GM12878 (cell line): ENCODE measurements at regions of chr1 and their contacts with region 1.

Region 1: DNA sequence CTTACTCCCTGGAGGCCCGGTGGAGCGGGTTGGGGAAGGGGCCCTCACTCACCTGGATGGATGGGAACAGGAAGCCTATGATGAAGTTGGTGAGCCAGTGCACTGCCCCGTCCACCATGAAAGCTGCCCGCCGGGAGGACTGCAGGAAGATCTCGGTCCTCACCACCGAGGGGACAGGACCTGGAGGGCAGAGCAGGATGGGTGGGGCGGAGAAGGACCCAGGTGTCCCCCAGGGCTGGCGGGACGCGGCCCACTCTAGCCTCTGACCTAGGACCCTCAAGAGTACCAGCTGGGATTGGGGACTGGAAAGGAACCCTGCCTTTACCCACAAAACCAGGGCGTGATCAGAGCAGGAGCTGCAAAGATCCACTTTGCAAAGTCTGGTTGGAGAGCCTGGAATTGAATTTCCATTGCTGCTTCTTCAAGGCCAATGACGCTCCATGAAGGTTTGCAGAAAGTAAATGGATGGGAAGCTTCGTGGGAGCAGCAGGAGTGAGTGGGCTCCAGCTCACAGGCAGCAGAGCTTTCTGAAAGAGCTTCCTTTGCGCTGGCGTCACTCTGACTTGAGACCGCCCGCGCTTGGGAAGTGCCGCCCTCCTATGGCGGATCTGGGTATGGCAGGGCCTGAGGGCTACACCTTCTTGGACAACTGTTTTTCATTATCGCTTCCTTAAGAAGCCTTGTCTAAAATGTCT is 21.4 kb downstream of the SLC2A7 start:
- DNase-seq: no peak
- ATAC-seq: peak; percentile 73
- H3K4me3 ChIP-seq: no peak overlapping the region
- H3K27ac ChIP-seq: no peak overlapping the region
- H3K4me1 ChIP-seq: peaks cover 22% of the 10 kb centered on the region
- H3K27me3 ChIP-seq: no peaks in the 10 kb centered on the region
- CTCF ChIP-seq: peak; percentile 89 to 97 (median 97)
- EP300 ChIP-seq: no peak
- POLR2A ChIP-seq: no peak
- RAD21 ChIP-seq: peak; percentile 82

Region 2: GRCh38 chr1:8358904-8359603 is 645.8 kb before region 1 on chr1:
- CTCF ChIA-PET with region 1: no interaction called
- POLR2A ChIA-PET with region 1: no interaction called
- RAD21 ChIA-PET with region 1: no interaction called
- SMC1A ChIA-PET with region 1: no interaction called
- in situ Hi-C with region 1: no loop called
- intact Hi-C with region 1: no loop called
- DNase-seq: no peak
- ATAC-seq: no peak
- H3K4me3 ChIP-seq: no peak overlapping the region
- H3K27ac ChIP-seq: no peak overlapping the region
- H3K4me1 ChIP-seq: no peaks in the 10 kb centered on the region
- H3K27me3 ChIP-seq: no peaks in the 10 kb centered on the region
- CTCF ChIP-seq: no peak
- EP300 ChIP-seq: no peak
- POLR2A ChIP-seq: 0 out of 2 replicates have a peak, but pooled peaks have one; percentile 3
- RAD21 ChIP-seq: no peak

Region 3: DNA sequence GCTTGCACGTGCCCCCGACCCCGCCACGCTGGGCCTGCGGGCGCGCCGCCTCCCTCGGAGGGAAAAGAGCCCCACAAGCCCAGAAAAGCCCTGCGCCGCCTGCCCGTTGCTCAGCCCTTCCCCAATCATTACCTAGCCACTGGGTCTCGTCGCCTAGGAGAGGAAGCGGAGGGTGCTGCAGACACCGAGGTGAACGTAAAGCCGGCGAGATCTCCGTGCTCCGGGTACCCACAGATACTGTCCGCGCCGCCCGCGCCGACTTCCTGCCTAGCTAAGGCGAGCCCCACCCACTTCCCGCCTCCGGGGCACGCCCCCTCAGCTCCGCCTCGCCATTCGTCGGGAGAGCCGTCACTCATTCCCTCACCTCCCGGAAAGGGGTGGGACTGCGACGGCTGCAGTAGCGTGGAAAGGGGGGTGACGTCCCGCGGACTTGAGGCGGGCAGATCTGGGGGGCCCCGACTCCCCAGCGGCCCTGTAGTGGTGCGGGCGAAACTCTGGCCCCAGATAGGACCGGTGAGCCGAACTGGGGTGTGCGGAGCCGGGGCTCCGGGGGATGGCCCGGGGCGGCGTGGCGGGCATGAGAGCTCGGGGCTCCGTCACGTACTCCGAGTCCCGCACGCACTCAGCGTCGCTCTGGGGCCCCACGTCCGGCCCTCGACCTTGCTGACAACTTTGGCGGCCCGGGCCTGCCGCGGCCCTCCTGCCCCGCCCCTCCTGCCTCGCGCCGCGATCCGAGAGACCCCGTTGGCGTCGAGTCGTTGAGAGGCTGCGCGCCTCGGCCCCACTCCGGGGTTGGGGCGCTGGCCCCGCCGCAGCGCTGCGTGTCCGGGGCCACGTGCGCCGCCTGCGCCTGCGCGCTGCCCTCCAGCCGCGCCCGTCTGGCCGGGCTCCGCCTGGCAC is 126.1 kb before region 1 on chr1 and contains the start of gene ENO1:
- CTCF ChIA-PET with region 1: interaction called, 10 read pairs
- POLR2A ChIA-PET with region 1: no interaction called
- RAD21 ChIA-PET with region 1: interaction called, 3 read pairs
- SMC1A ChIA-PET with region 1: no interaction called
- in situ Hi-C with region 1: no loop called
- intact Hi-C with region 1: no loop called
- DNase-seq: peak; percentile 98
- ATAC-seq: peak; percentile 80
- H3K4me3 ChIP-seq: peak within 1 kb of the TSS; percentile 89
- H3K27ac ChIP-seq: peak within 1 kb of the TSS; percentile 99
- H3K4me1 ChIP-seq: peaks cover 15% of the 10 kb centered on the region
- H3K27me3 ChIP-seq: no peaks in the 10 kb centered on the region
- CTCF ChIP-seq: no peak
- EP300 ChIP-seq: 0 out of 4 replicates have a peak, but pooled peaks have one; percentile 6 to 8
- POLR2A ChIP-seq: peak; percentile 95
- RAD21 ChIP-seq: no peak
- polyA plus RNA-seq, gene ENO1: 3,300 to 4,219 TPM

Region 4: DNA sequence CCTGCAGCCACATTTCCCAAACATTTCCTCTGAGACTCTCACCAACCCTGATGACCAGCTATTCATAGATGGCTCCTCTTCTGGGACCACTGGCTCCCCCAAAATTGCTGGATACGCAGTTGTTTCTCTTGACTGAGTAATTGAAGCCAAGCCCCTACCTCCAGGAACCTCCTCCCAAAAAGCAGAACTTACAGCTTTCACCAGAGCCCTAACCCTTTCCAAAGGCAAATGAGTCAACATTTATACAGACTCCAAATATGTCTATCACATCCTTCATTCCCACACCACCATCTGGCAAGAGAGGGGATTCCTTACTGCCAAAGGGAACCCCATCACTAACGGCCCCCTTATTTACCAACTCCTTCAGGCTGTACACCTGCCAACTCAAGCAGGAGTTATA is 79.4 kb before region 1 on chr1:
- CTCF ChIA-PET with region 1: interaction called, 49 read pairs
- POLR2A ChIA-PET with region 1: no interaction called
- RAD21 ChIA-PET with region 1: interaction called, 5 read pairs
- SMC1A ChIA-PET with region 1: interaction called, 3 read pairs
- in situ Hi-C with region 1: no loop called
- intact Hi-C with region 1: no loop called
- DNase-seq: no peak
- ATAC-seq: no peak
- H3K4me3 ChIP-seq: no peak overlapping the region
- H3K27ac ChIP-seq: no peak overlapping the region
- H3K4me1 ChIP-seq: no peaks in the 10 kb centered on the region; the same call in 1 of the 2 replicates
- H3K27me3 ChIP-seq: no peaks in the 10 kb centered on the region; a peak in 2 of 4 replicates
- CTCF ChIP-seq: no peak
- EP300 ChIP-seq: no peak
- POLR2A ChIP-seq: no peak
- RAD21 ChIP-seq: no peak

Region 5: GRCh38 chr1:8987881-8988617 is 16.8 kb before region 1 on chr1:
- CTCF ChIA-PET with region 1: interaction called, 37 read pairs
- POLR2A ChIA-PET with region 1: no interaction called
- RAD21 ChIA-PET with region 1: interaction called, 10 read pairs
- SMC1A ChIA-PET with region 1: interaction called, 17 read pairs
- in situ Hi-C with region 1: no loop called
- intact Hi-C with region 1: no loop called
- DNase-seq: no peak
- ATAC-seq: peak; percentile 92
- H3K4me3 ChIP-seq: no peak overlapping the region
- H3K27ac ChIP-seq: no peak overlapping the region
- H3K4me1 ChIP-seq: no peaks in the 10 kb centered on the region
- H3K27me3 ChIP-seq: no peaks in the 10 kb centered on the region
- CTCF ChIP-seq: peak; percentile 82 to 91 (median 91)
- EP300 ChIP-seq: no peak
- POLR2A ChIP-seq: no peak
- RAD21 ChIP-seq: peak; percentile 80

Region 6: DNA sequence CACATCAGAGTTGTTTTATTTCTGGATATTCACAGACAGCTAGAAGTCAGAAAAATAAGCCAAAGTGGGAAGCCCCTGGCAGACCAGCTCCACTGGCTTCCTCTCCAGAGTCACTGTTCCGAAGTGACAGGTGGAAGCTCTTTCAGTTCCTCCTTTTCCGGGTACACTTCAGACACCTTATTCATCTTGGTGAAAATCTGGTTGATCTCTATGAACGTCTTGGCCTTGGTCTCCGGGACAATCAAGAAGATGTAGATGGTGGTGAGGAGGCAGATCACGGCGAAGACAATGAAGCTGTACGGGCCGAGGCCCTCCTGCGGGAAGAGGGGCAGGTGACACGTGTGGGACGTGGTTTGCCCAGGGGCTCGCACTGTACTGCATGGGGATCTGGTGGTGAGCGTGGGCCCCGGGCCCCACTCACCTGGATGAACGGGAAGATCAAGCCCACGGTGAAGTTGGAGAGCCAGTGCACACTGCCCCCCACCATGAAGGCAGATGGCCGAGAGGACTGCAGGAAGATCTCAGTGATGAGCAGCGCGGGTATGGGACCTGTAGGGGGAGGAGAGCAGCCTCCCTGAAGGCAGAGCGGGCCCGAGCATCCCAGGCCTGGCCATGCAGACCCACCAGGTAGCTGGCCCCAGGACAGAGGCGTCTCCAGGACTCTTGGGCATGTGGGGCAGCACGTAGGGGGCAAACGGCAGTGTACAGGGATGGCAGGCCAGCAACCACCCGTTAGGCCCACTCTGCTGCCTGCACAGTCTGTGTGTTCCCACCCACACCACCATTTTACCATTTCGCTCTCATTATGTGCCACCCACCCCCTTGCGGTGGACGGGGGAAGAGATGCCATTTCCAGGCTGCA is 32.9 kb after region 1 on chr1:
- CTCF ChIA-PET with region 1: interaction called, 10 read pairs
- POLR2A ChIA-PET with region 1: no interaction called
- RAD21 ChIA-PET with region 1: interaction called, 7 read pairs
- SMC1A ChIA-PET with region 1: interaction called, 7 read pairs
- in situ Hi-C with region 1: no loop called
- intact Hi-C with region 1: no loop called
- DNase-seq: peak; percentile 56
- ATAC-seq: peak; percentile 89
- H3K4me3 ChIP-seq: no peak overlapping the region
- H3K27ac ChIP-seq: peak overlapping the region; percentile 89
- H3K4me1 ChIP-seq: peaks cover 27% of the 10 kb centered on the region
- H3K27me3 ChIP-seq: no peaks in the 10 kb centered on the region
- CTCF ChIP-seq: no peak
- EP300 ChIP-seq: peak; percentile 50 to 76; a peak in 3 of 4 replicates
- POLR2A ChIP-seq: peak; percentile 30; the same call in 1 of the 2 replicates
- RAD21 ChIP-seq: no peak

Region 7: DNA sequence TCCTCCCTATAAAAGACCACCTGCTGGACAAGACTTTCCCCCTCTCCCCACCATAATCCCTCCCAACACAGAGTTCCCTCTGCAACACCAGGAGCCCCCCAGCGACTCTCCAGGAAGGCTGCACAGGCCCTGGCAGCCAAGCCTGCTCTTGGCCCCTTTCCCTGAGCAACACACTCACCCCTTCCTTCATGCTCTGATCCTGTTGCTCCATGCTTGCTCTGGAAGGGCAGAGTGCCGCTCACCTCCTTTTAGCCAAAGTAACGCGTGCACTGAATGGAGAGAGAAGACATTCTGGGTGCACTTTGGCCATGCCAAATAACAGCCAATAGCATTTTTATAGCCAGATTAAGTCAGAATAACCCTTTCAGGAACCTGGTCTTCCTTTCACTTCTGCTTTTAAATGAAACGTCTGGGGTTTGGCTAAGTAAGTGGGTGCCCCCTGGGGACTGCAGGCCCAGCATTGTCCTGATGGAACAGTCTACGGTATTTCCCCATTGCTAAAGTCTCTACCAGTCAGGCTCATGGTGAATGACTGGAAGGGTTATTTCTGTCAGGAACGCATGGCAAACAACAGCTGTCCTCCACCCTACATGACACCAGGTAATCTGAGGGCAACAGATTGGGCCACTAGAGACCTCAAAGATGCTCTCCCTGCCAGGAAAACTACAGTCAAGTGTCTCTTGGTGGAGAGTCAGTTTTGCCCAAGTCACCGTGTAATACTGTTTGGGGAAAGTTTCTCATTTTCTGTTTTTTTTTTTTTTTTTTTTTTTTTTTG is 64.7 kb after region 1 on chr1 and contains the start of gene SLC2A5:
- CTCF ChIA-PET with region 1: interaction called, 16 read pairs
- POLR2A ChIA-PET with region 1: interaction called, 3 read pairs
- RAD21 ChIA-PET with region 1: interaction called, 6 read pairs
- SMC1A ChIA-PET with region 1: interaction called, 11 read pairs
- in situ Hi-C with region 1: no loop called
- intact Hi-C with region 1: loop called (anchors 2 kb)
- DNase-seq: peak; percentile 93
- ATAC-seq: peak; percentile 88
- H3K4me3 ChIP-seq: peak within 1 kb of the TSS; percentile 79
- H3K27ac ChIP-seq: peak within 1 kb of the TSS; percentile 93
- H3K4me1 ChIP-seq: peaks cover 34% of the 10 kb centered on the region
- H3K27me3 ChIP-seq: no peaks in the 10 kb centered on the region
- CTCF ChIP-seq: peak in 1 of 3 experiments; percentile 7; a peak in 2 of 6 replicates
- EP300 ChIP-seq: peak; percentile 86 to 93; a peak in 2 of 4 replicates
- POLR2A ChIP-seq: peak; percentile 84
- RAD21 ChIP-seq: no peak
- polyA plus RNA-seq, gene SLC2A5: 4.5 to 5.2 TPM

Region 8: GRCh38 chr1:9101510-9102146 is 96.8 kb after region 1 on chr1:
- CTCF ChIA-PET with region 1: interaction called, 126 read pairs
- POLR2A ChIA-PET with region 1: interaction called, 3 read pairs
- RAD21 ChIA-PET with region 1: interaction called, 32 read pairs
- SMC1A ChIA-PET with region 1: interaction called, 38 read pairs
- in situ Hi-C with region 1: loop called (anchors 5 kb)
- intact Hi-C with region 1: loop called (anchors 1 kb)
- DNase-seq: no peak
- ATAC-seq: peak; percentile 100
- H3K4me3 ChIP-seq: no peak overlapping the region
- H3K27ac ChIP-seq: no peak overlapping the region
- H3K4me1 ChIP-seq: no peaks in the 10 kb centered on the region
- H3K27me3 ChIP-seq: no peaks in the 10 kb centered on the region
- CTCF ChIP-seq: peak; percentile 78 to 90 (median 83)
- EP300 ChIP-seq: no peak
- POLR2A ChIP-seq: no peak
- RAD21 ChIP-seq: peak; percentile 86

Region 9: GRCh38 chr1:9449106-9449627 is 444.3 kb after region 1 on chr1:
- CTCF ChIA-PET with region 1: no interaction called
- POLR2A ChIA-PET with region 1: no interaction called
- RAD21 ChIA-PET with region 1: no interaction called
- SMC1A ChIA-PET with region 1: no interaction called
- in situ Hi-C with region 1: no loop called
- intact Hi-C with region 1: no loop called
- DNase-seq: no peak
- ATAC-seq: no peak
- H3K4me3 ChIP-seq: no peak overlapping the region
- H3K27ac ChIP-seq: no peak overlapping the region
- H3K4me1 ChIP-seq: 0 out of 2 replicates have a peak, but pooled peaks cover 3% of the 10 kb centered on the region
- H3K27me3 ChIP-seq: no peaks in the 10 kb centered on the region
- CTCF ChIP-seq: no peak
- EP300 ChIP-seq: no peak
- POLR2A ChIP-seq: no peak
- RAD21 ChIP-seq: no peak